Astrocyte of the cerebellum (primary cell): ENCODE measurements at regions of chr12 and their contacts with region 1.

Region 1: GRCh38 chr12:40622246-40622838 is 69.9 kb upstream of the CNTN1 start:
- DNase-seq: peak; percentile 44
- H3K4me3 ChIP-seq: no peak overlapping the region
- CTCF ChIP-seq: peak; percentile 84

Region 2: GRCh38 chr12:40552868-40553267 is 69.5 kb before region 1 on chr12:
- in situ Hi-C with region 1: no loop called
- DNase-seq: no peak
- H3K4me3 ChIP-seq: no peak overlapping the region
- CTCF ChIP-seq: no peak

Region 3: GRCh38 chr12:40921563-40922163 is 299.3 kb after region 1 on chr12:
- in situ Hi-C with region 1: loop called (anchors 25 kb)
- DNase-seq: peak; percentile 6
- H3K4me3 ChIP-seq: no peak overlapping the region
- CTCF ChIP-seq: peak; percentile 21

Region 4: DNA sequence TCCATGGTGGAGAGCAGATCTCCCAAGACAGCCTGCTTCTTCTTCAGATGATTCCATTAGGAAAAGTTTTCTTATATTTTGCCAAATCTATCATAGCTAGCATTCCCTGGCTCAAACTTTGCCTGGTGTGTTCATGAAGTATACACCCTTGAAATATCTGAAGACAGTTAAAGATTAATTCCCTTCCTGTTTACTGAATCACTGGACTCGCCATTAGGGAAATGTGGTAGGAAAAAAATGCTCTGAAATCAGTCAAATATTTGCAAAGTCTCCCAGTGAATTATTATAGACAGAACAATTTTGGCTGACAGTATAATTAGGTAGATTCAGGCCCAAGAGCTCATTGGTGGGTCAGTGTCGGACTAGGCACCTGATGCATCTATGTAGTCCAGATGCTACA is 652.3 kb after region 1 on chr12:
- in situ Hi-C with region 1: no loop called
- DNase-seq: no peak
- H3K4me3 ChIP-seq: no peak overlapping the region
- CTCF ChIP-seq: no peak